Endothelial cell of umbilical vein (primary cell): ENCODE measurements at regions of chr16 and their contacts with region 1.

Region 1: DNA sequence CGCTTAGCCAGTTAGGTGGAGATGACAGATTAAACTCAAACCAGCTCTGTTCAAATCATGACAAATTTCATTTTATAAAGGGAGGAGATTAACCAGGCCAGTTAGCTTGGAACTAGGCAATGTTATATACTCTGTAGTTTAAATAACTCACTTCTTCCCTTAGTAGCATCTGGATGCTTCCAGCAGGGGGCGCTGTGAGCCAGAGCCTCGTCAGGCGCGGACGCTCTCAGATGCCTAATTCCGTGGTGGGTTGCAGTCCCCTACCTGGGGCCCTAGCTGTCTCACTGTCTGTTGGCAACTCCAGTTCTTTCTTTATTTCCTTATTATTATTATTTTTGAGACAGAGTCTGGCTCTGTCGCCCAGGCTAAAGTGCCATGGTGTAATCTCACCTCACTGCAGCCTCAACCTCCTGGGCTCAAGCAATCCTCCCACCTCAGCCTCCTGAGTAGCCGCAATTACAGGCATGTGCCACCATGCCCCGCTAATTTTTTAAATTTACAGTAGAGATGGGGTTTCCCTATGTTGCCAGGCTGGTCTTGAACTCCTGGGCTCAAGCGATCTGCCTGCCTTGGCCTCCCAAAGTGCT is 17.3 kb upstream of the WFDC1 start:
- DNase-seq: peak; percentile 54
- H3K4me3 ChIP-seq: no peak overlapping the region
- H3K27ac ChIP-seq: no peak overlapping the region
- H3K4me1 ChIP-seq: no peaks in the 10 kb centered on the region
- H3K27me3 ChIP-seq: peaks cover 0 to 4% of the 10 kb centered on the region in 2 experiments
- CTCF ChIP-seq: peak; percentile 77
- POLR2A ChIP-seq: no peak

Region 2: GRCh38 chr16:83258366-83258928 is 1018.9 kb before region 1 on chr16:
- CTCF ChIA-PET with region 1: no interaction called
- POLR2A ChIA-PET with region 1: no interaction called
- dilution Hi-C with region 1: no loop called
- intact Hi-C with region 1: no loop called
- DNase-seq: no peak
- H3K4me3 ChIP-seq: no peak overlapping the region
- H3K27ac ChIP-seq: no peak overlapping the region
- H3K4me1 ChIP-seq: no peaks in the 10 kb centered on the region
- H3K27me3 ChIP-seq: no peaks in the 10 kb centered on the region
- CTCF ChIP-seq: no peak
- POLR2A ChIP-seq: no peak

Region 3: GRCh38 chr16:84266451-84266850 is 10.9 kb before region 1 on chr16:
- CTCF ChIA-PET with region 1: interaction called, 42 read pairs
- POLR2A ChIA-PET with region 1: no interaction called
- dilution Hi-C with region 1: no loop called
- intact Hi-C with region 1: no loop called
- DNase-seq: peak; percentile 71
- H3K4me3 ChIP-seq: no peak overlapping the region
- H3K27ac ChIP-seq: no peak overlapping the region
- H3K4me1 ChIP-seq: no peaks in the 10 kb centered on the region
- H3K27me3 ChIP-seq: no peaks in the 10 kb centered on the region
- CTCF ChIP-seq: no peak
- POLR2A ChIP-seq: no peak

Region 4: GRCh38 chr16:84308120-84308519 is 30.8 kb after region 1 on chr16:
- CTCF ChIA-PET with region 1: interaction called, 21 read pairs
- POLR2A ChIA-PET with region 1: no interaction called
- dilution Hi-C with region 1: no loop called
- intact Hi-C with region 1: loop called (anchors 1 kb)
- DNase-seq: peak; percentile 15
- H3K4me3 ChIP-seq: no peak overlapping the region
- H3K27ac ChIP-seq: no peak overlapping the region
- H3K4me1 ChIP-seq: no peaks in the 10 kb centered on the region
- H3K27me3 ChIP-seq: peaks cover 14 to 23% of the 10 kb centered on the region in 2 experiments
- CTCF ChIP-seq: peak; percentile 32 to 58
- POLR2A ChIP-seq: no peak

Region 5: DNA sequence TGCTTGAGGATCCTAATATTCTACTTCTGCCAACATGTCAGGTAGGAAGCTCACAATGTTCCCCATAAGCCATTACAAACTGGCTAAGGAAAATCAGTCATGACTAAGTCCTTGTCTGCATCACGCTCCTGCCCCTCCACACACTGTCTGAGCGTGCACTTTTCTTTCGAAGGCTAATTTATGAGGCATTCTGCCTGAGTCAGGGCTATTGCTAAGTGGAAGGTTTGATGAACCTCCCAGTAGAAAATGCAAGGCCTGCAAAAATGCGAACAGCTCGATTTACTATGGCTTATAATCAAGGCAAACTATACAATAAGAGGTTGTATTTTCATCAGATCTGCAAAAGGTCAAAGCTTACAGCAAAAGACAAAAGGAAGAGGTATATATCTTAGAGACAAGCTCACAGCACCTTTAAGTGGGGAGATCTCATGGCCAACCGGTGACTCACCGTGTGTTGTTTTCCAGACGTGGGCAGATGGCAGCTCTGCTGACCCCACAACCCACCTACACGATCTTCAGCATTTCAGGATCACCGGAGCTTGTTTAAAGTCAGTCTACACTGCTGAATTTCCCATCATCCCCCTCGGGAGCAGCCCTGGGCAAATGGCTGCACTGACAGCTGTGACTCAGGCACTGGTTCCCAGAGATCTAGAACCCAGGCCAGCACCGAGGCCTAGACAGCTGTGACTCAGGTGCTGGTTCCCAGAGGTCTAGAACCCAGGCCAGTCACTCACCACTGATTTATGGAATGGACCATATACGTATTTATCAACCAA is 201.0 kb after region 1 on chr16:
- CTCF ChIA-PET with region 1: interaction called, 48 read pairs
- POLR2A ChIA-PET with region 1: no interaction called
- dilution Hi-C with region 1: no loop called
- intact Hi-C with region 1: no loop called
- DNase-seq: no peak
- H3K4me3 ChIP-seq: no peak overlapping the region
- H3K27ac ChIP-seq: no peak overlapping the region
- H3K4me1 ChIP-seq: no peaks in the 10 kb centered on the region
- H3K27me3 ChIP-seq: no peaks in the 10 kb centered on the region
- CTCF ChIP-seq: no peak
- POLR2A ChIP-seq: no peak

Region 6: DNA sequence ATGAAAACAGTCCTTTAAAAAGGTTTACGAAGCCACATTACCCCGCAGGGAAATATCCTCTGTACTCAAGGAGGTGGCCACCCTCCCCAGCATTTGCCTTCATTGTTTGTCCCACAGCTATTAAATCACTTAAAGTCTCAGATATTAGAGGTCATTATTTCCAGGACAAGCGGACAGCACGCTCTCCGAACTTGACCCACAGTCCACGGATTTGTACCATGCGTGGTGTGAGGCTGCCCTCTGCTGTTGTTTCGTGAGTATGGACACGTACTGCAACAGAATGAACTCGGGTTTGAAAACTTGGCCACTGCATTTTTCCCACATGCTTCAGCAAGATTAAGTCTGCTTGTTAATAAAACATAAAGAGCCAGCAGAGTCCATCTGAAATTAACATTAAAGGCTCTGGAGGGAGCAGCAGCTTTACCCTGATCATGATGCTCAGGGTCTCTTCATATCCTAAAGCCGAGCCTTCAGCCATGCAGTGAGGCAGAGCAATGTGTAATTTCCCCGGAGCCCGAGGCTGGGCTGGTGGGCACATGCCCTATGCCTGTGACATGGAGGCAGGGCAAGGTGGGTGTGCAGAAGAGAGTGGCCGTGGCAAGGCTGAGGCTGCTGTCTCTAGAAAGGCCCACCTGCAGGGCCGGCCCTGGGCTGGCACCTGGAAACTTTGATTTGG is 207.4 kb after region 1 on chr16:
- CTCF ChIA-PET with region 1: interaction called, 48 read pairs
- POLR2A ChIA-PET with region 1: no interaction called
- dilution Hi-C with region 1: no loop called
- intact Hi-C with region 1: loop called (anchors 1 kb)
- DNase-seq: peak; percentile 61
- H3K4me3 ChIP-seq: no peak overlapping the region
- H3K27ac ChIP-seq: no peak overlapping the region
- H3K4me1 ChIP-seq: no peaks in the 10 kb centered on the region
- H3K27me3 ChIP-seq: no peaks in the 10 kb centered on the region
- CTCF ChIP-seq: peak; percentile 58 to 69
- POLR2A ChIP-seq: no peak

Region 7: GRCh38 chr16:84504420-84505248 is 227.3 kb after region 1 on chr16 and contains the start of gene MEAK7:
- CTCF ChIA-PET with region 1: interaction called, 39 read pairs
- POLR2A ChIA-PET with region 1: no interaction called
- dilution Hi-C with region 1: no loop called
- intact Hi-C with region 1: loop called (anchors 1 kb)
- DNase-seq: peak; percentile 98
- H3K4me3 ChIP-seq: peak within 1 kb of the TSS; percentile 61 to 81 (median 62)
- H3K27ac ChIP-seq: peak within 1 kb of the TSS; percentile 38
- H3K4me1 ChIP-seq: peaks cover 10% of the 10 kb centered on the region
- H3K27me3 ChIP-seq: no peaks in the 10 kb centered on the region
- CTCF ChIP-seq: no peak
- POLR2A ChIP-seq: no peak
- total RNA-seq, gene MEAK7: 19.3 and 22.7 TPM in 2 replicates

Region 8: GRCh38 chr16:85162478-85163277 is 885.3 kb after region 1 on chr16:
- CTCF ChIA-PET with region 1: no interaction called
- POLR2A ChIA-PET with region 1: no interaction called
- dilution Hi-C with region 1: no loop called
- intact Hi-C with region 1: no loop called
- DNase-seq: peak; percentile 46
- H3K4me3 ChIP-seq: no peak overlapping the region
- H3K27ac ChIP-seq: no peak overlapping the region
- H3K4me1 ChIP-seq: peaks cover 10% of the 10 kb centered on the region
- H3K27me3 ChIP-seq: no peaks in the 10 kb centered on the region
- CTCF ChIP-seq: no peak
- POLR2A ChIP-seq: no peak